ENCODE measurements at regions of chr1 and their contacts with region 1.

Region 1: DNA sequence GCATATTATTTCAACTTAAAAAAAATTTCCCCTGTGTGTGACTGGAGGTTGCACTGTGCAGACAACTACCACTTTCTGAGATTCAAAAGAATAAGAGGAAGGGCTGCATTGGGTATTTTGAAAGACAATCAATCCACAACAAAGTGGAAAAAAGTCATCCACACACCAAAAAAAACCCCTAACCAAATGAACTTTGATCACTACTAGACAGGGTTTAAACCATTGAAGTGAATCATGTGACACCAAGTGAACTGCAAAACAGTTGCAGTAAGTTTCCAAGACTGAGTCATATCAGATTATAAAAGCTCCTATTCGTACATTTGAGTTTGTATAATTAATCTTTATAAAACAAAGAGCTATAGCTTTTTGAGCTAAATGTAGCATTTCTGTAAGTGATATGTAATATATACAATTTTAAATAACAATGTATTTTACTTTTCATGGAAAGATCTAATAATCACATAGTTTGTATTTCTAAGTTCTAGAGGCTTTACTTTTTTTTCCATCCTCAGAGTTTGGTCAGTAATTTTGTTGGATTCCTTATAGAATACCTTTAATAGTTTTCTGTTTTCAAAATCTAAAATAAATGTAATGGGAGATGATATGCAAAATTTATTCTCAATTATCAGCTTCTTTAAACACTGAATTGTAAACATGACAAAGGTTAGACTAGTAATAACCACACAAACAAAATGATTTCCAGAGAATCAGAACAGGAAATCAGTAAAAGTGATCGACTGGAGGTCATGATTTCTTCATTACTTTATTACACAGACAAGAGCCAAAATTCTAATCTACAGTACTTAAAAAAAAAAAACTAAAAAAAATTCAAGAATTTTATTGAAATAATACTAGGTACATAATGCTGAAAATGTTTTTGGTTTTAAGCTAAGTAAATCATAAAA is 50.5 kb upstream of the GFI1 start:
- DNase-seq: peak; percentile 82
- ATAC-seq: peak; percentile 79
- H3K4me3 ChIP-seq: no peak overlapping the region
- H3K27ac ChIP-seq: peak overlapping the region; percentile 79
- H3K4me1 ChIP-seq: peaks cover 14% of the 10 kb centered on the region
- H3K27me3 ChIP-seq: no peaks in the 10 kb centered on the region
- CTCF ChIP-seq: no peak
- EP300 ChIP-seq: peak; percentile 74 to 95; a peak in 3 of 4 replicates
- POLR2A ChIP-seq: no peak
- RAD21 ChIP-seq: no peak

Region 2: GRCh38 chr1:92211166-92211565 is 326.1 kb before region 1 on chr1:
- CTCF ChIA-PET with region 1: no interaction called
- POLR2A ChIA-PET with region 1: no interaction called
- RAD21 ChIA-PET with region 1: no interaction called
- SMC1A ChIA-PET with region 1: no interaction called
- in situ Hi-C with region 1: no loop called
- intact Hi-C with region 1: no loop called
- DNase-seq: no peak
- ATAC-seq: no peak
- H3K4me3 ChIP-seq: no peak overlapping the region
- H3K27ac ChIP-seq: no peak overlapping the region
- H3K4me1 ChIP-seq: no peaks in the 10 kb centered on the region
- H3K27me3 ChIP-seq: no peaks in the 10 kb centered on the region
- CTCF ChIP-seq: no peak
- EP300 ChIP-seq: no peak
- POLR2A ChIP-seq: no peak
- RAD21 ChIP-seq: no peak

Region 3: DNA sequence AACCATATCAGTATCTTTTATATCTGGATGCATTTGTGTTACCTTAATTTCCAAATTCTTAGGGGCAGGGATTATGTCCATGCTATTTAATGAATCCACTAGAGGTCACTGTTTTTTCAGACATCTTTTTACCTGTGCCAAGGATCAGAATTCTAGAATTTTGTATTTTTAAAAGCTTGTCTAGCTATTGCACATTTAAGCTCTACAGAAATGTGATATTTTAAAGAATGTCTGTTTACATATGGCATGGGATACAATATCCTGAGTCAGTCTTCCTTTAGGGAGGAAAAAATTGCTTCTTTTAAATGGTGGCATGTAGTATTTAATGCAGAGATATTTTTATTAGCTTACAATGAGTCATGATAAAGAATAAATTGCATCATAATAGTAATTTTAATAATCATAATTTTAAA is 227.0 kb before region 1 on chr1:
- CTCF ChIA-PET with region 1: interaction called, 8 read pairs
- POLR2A ChIA-PET with region 1: no interaction called
- RAD21 ChIA-PET with region 1: interaction called, 17 read pairs
- SMC1A ChIA-PET with region 1: interaction called, 7 read pairs
- in situ Hi-C with region 1: no loop called
- intact Hi-C with region 1: no loop called
- DNase-seq: no peak
- ATAC-seq: peak; percentile 74
- H3K4me3 ChIP-seq: no peak overlapping the region
- H3K27ac ChIP-seq: no peak overlapping the region
- H3K4me1 ChIP-seq: peaks cover 3% of the 10 kb centered on the region; the same call in 1 of the 2 replicates
- H3K27me3 ChIP-seq: no peaks in the 10 kb centered on the region
- CTCF ChIP-seq: peak; percentile 42 to 62 (median 44); a peak in 5 of 6 replicates
- EP300 ChIP-seq: no peak
- POLR2A ChIP-seq: no peak
- RAD21 ChIP-seq: peak; percentile 76

Region 4: GRCh38 chr1:92411511-92411910 is 125.7 kb before region 1 on chr1:
- CTCF ChIA-PET with region 1: no interaction called
- POLR2A ChIA-PET with region 1: no interaction called
- RAD21 ChIA-PET with region 1: no interaction called
- SMC1A ChIA-PET with region 1: no interaction called
- in situ Hi-C with region 1: no loop called
- intact Hi-C with region 1: no loop called
- DNase-seq: no peak
- ATAC-seq: no peak
- H3K4me3 ChIP-seq: no peak overlapping the region
- H3K27ac ChIP-seq: no peak overlapping the region
- H3K4me1 ChIP-seq: no peaks in the 10 kb centered on the region; the same call in 1 of the 2 replicates
- H3K27me3 ChIP-seq: no peaks in the 10 kb centered on the region
- CTCF ChIP-seq: no peak
- EP300 ChIP-seq: no peak
- POLR2A ChIP-seq: no peak
- RAD21 ChIP-seq: no peak

Region 5: GRCh38 chr1:92485381-92486257 is 51.6 kb before region 1 on chr1:
- CTCF ChIA-PET with region 1: interaction called, 60 read pairs
- POLR2A ChIA-PET with region 1: interaction called, 77 read pairs
- RAD21 ChIA-PET with region 1: interaction called, 138 read pairs
- SMC1A ChIA-PET with region 1: interaction called, 100 read pairs
- in situ Hi-C with region 1: no loop called
- intact Hi-C with region 1: loop called (anchors 1 kb)
- DNase-seq: no peak
- ATAC-seq: peak; percentile 63
- H3K4me3 ChIP-seq: peak overlapping the region; percentile 93
- H3K27ac ChIP-seq: peak overlapping the region; percentile 77
- H3K4me1 ChIP-seq: peaks cover 6% of the 10 kb centered on the region
- H3K27me3 ChIP-seq: no peaks in the 10 kb centered on the region
- CTCF ChIP-seq: peak; percentile 55 to 69 (median 56)
- EP300 ChIP-seq: no peak
- POLR2A ChIP-seq: peak; percentile 74
- RAD21 ChIP-seq: peak; percentile 45

Region 6: GRCh38 chr1:92502247-92502646 is 35.0 kb before region 1 on chr1:
- CTCF ChIA-PET with region 1: no interaction called
- POLR2A ChIA-PET with region 1: interaction called, 3 read pairs
- RAD21 ChIA-PET with region 1: interaction called, 8 read pairs
- SMC1A ChIA-PET with region 1: interaction called, 14 read pairs
- in situ Hi-C with region 1: no loop called
- intact Hi-C with region 1: loop called (anchors 2 kb)
- DNase-seq: no peak
- ATAC-seq: peak; percentile 82
- H3K4me3 ChIP-seq: no peak overlapping the region
- H3K27ac ChIP-seq: no peak overlapping the region
- H3K4me1 ChIP-seq: peaks cover 31% of the 10 kb centered on the region
- H3K27me3 ChIP-seq: no peaks in the 10 kb centered on the region
- CTCF ChIP-seq: no peak
- EP300 ChIP-seq: no peak
- POLR2A ChIP-seq: no peak
- RAD21 ChIP-seq: no peak

Region 7: GRCh38 chr1:92554216-92554615 is 17.0 kb after region 1 on chr1:
- CTCF ChIA-PET with region 1: interaction called, 7 read pairs
- POLR2A ChIA-PET with region 1: interaction called, 6 read pairs
- RAD21 ChIA-PET with region 1: interaction called, 12 read pairs
- SMC1A ChIA-PET with region 1: interaction called, 9 read pairs
- in situ Hi-C with region 1: no loop called
- intact Hi-C with region 1: no loop called
- DNase-seq: no peak
- ATAC-seq: no peak
- H3K4me3 ChIP-seq: no peak overlapping the region
- H3K27ac ChIP-seq: no peak overlapping the region
- H3K4me1 ChIP-seq: no peaks in the 10 kb centered on the region
- H3K27me3 ChIP-seq: no peaks in the 10 kb centered on the region
- CTCF ChIP-seq: no peak
- EP300 ChIP-seq: no peak
- POLR2A ChIP-seq: no peak
- RAD21 ChIP-seq: no peak

Region 8: GRCh38 chr1:92572520-92572919 is 35.3 kb after region 1 on chr1:
- CTCF ChIA-PET with region 1: interaction called, 4 read pairs
- POLR2A ChIA-PET with region 1: no interaction called
- RAD21 ChIA-PET with region 1: interaction called, 7 read pairs
- SMC1A ChIA-PET with region 1: interaction called, 12 read pairs
- in situ Hi-C with region 1: no loop called
- intact Hi-C with region 1: no loop called
- DNase-seq: no peak
- ATAC-seq: no peak
- H3K4me3 ChIP-seq: no peak overlapping the region
- H3K27ac ChIP-seq: no peak overlapping the region
- H3K4me1 ChIP-seq: no peaks in the 10 kb centered on the region
- H3K27me3 ChIP-seq: no peaks in the 10 kb centered on the region
- CTCF ChIP-seq: no peak
- EP300 ChIP-seq: no peak
- POLR2A ChIP-seq: no peak
- RAD21 ChIP-seq: no peak

Region 9: DNA sequence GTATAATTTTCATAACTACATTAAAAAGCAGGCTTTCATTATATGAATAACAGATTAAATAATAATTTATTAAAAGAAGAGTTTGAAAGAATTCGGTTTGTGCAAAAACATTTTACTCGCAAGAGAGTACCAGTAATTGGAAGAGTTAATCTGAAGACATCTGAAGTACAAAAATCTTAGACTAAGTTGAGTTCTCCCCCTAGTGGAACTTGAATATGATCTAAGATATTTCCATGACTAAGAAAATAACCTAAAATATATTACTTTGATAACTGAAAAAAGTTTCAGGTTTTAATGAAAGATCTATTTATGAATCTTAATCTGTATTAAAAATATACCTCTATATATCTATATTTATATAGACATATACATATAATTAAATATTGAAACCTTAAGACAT is 62.0 kb after region 1 on chr1:
- CTCF ChIA-PET with region 1: interaction called, 17 read pairs
- POLR2A ChIA-PET with region 1: interaction called, 3 read pairs
- RAD21 ChIA-PET with region 1: interaction called, 9 read pairs
- SMC1A ChIA-PET with region 1: interaction called, 31 read pairs
- in situ Hi-C with region 1: no loop called
- intact Hi-C with region 1: no loop called
- DNase-seq: no peak
- ATAC-seq: peak; percentile 76
- H3K4me3 ChIP-seq: no peak overlapping the region
- H3K27ac ChIP-seq: no peak overlapping the region
- H3K4me1 ChIP-seq: no peaks in the 10 kb centered on the region
- H3K27me3 ChIP-seq: no peaks in the 10 kb centered on the region
- CTCF ChIP-seq: peak; percentile 21 to 55 (median 25); a peak in 3 of 6 replicates
- EP300 ChIP-seq: no peak
- POLR2A ChIP-seq: no peak
- RAD21 ChIP-seq: peak; percentile 82

Measured in GM12878 (cell line).